ENCODE measurements at regions of chr6 and their contacts with region 1.

Region 1: GRCh38 chr6:79570129-79571029 is 33.1 kb upstream of the LCA5 start:
- DNase-seq: peak in 2 of 4 donors; percentile 57 to 80
- ATAC-seq: peak; percentile 93
- H3K4me3 ChIP-seq: no peak overlapping the region
- H3K27ac ChIP-seq: peak overlapping the region in 1 of 2 donors; percentile 8
- H3K4me1 ChIP-seq: peaks cover 5% of the 10 kb centered on the region in 2 donors
- H3K27me3 ChIP-seq: no peaks in the 10 kb centered on the region
- CTCF ChIP-seq: peak; percentile 47 to 69

Region 2: GRCh38 chr6:79215233-79215824 is 355.1 kb before region 1 on chr6:
- intact Hi-C with region 1: no loop called
- DNase-seq: no peak
- ATAC-seq: no peak
- H3K4me3 ChIP-seq: no peak overlapping the region
- H3K27ac ChIP-seq: no peak overlapping the region
- H3K4me1 ChIP-seq: no peaks in the 10 kb centered on the region
- H3K27me3 ChIP-seq: no peaks in the 10 kb centered on the region
- CTCF ChIP-seq: no peak

Region 3: GRCh38 chr6:79713701-79714322 is 143.4 kb after region 1 on chr6:
- intact Hi-C with region 1: loop called in 1 of 2 experiments (anchors 10 kb)
- DNase-seq: peak in 2 of 4 donors; percentile 27 to 62
- ATAC-seq: peak; percentile 80
- H3K4me3 ChIP-seq: no peak overlapping the region
- H3K27ac ChIP-seq: no peak overlapping the region
- H3K4me1 ChIP-seq: no peaks in the 10 kb centered on the region
- H3K27me3 ChIP-seq: no peaks in the 10 kb centered on the region
- CTCF ChIP-seq: peak; percentile 47 to 65

Measured in left lung (tissue), 14 donors.